ENCODE measurements at regions of chr12 and their contacts with region 1.

Region 1: GRCh38 chr12:1629338-1630132 is 504 bp downstream of the WNT5B start:
- DNase-seq: no peak
- H3K4me3 ChIP-seq: peak overlapping the region; percentile 47 to 82
- H3K27ac ChIP-seq: peak overlapping the region; percentile 22
- H3K4me1 ChIP-seq: peaks cover 30% of the 10 kb centered on the region
- H3K27me3 ChIP-seq: no peaks in the 10 kb centered on the region
- CTCF ChIP-seq: no peak
- POLR2A ChIP-seq: no peak

Region 2: GRCh38 chr12:2924019-2924418 is 1294.5 kb after region 1 on chr12:
- intact Hi-C with region 1: loop called (anchors 10 kb)
- DNase-seq: no peak
- H3K4me3 ChIP-seq: no peak overlapping the region
- H3K27ac ChIP-seq: no peak overlapping the region
- H3K4me1 ChIP-seq: no peaks in the 10 kb centered on the region
- H3K27me3 ChIP-seq: no peaks in the 10 kb centered on the region
- CTCF ChIP-seq: no peak
- POLR2A ChIP-seq: no peak

Measured in vagina (tissue), 2 donors.